SK-N-SH (cell line): ENCODE measurements at regions of chrX and their contacts with region 1.

Region 1: DNA sequence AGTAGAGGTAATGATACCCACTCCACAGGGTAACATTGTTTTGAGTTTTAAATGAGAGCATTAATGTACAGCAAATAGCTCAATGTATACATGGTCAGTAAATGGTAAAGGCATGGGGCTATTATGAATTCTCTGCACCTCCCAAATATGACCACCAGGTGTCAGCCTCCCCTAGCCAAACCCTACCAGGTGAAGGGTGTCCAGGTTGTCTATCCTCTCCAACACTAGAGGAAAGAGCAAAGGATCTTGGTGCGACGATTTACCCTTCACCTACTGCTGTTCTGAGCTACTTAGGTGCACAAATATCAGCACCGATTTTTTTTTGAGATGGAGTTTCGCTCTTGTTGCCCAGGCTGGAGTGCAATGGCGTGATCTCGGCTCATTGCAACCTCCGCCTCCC is 26.5 kb upstream of the XIAP start:
- DNase-seq: peak; percentile 72
- H3K4me3 ChIP-seq: no peak overlapping the region
- H3K27ac ChIP-seq: no peak overlapping the region
- H3K4me1 ChIP-seq: no peaks in the 10 kb centered on the region
- H3K27me3 ChIP-seq: no peaks in the 10 kb centered on the region; the same call in 1 of the 2 replicates
- CTCF ChIP-seq: peak; percentile 86
- EP300 ChIP-seq: no peak
- RAD21 ChIP-seq: peak; percentile 91

Region 2: GRCh38 chrX:123960042-123960611 is 126.7 kb after region 1 on chrX:
- CTCF ChIA-PET with region 1: interaction called, 15 read pairs
- POLR2A ChIA-PET with region 1: no interaction called
- DNase-seq: peak; percentile 89
- H3K4me3 ChIP-seq: peak overlapping the region; percentile 64 to 82
- H3K27ac ChIP-seq: peak overlapping the region; percentile 95 to 96
- H3K4me1 ChIP-seq: no peaks in the 10 kb centered on the region; a peak in 1 of 4 replicates
- H3K27me3 ChIP-seq: no peaks in the 10 kb centered on the region
- CTCF ChIP-seq: peak; percentile 52
- EP300 ChIP-seq: no peak
- RAD21 ChIP-seq: peak; percentile 80

Region 3: GRCh38 chrX:123976706-123977316 is 143.4 kb after region 1 on chrX:
- CTCF ChIA-PET with region 1: interaction called, 14 read pairs
- POLR2A ChIA-PET with region 1: no interaction called
- DNase-seq: peak; percentile 23
- H3K4me3 ChIP-seq: no peak overlapping the region
- H3K27ac ChIP-seq: peak overlapping the region in 1 of 2 experiments; percentile 6; a peak in 1 of 4 replicates
- H3K4me1 ChIP-seq: peaks cover 0 to 9% of the 10 kb centered on the region in 2 experiments; a peak in 1 of 4 replicates
- H3K27me3 ChIP-seq: no peaks in the 10 kb centered on the region; the same call in 1 of the 2 replicates
- CTCF ChIP-seq: peak; percentile 65
- EP300 ChIP-seq: no peak
- RAD21 ChIP-seq: peak; percentile 75